Naive thymus-derived CD4-positive, alpha-beta T cell (primary cell): ENCODE measurements at regions of chr12 and their contacts with region 1.

Region 1: GRCh38 chr12:123983822-123984485 is 10.9 kb downstream of the ZNF664 start:
- DNase-seq: peak; percentile 15 to 71 (median 53)
- ATAC-seq: peak; percentile 92
- H3K4me3 ChIP-seq: no peak overlapping the region
- H3K4me3 Mint-ChIP-seq: no peak overlapping the region
- H3K27ac ChIP-seq: no peak overlapping the region
- H3K27ac Mint-ChIP-seq: peak overlapping the region in 1 of 9 donors; percentile 1
- H3K4me1 ChIP-seq: no peaks in the 10 kb centered on the region
- H3K4me1 Mint-ChIP-seq: peaks cover 9 to 33% (median 26%) of the 10 kb centered on the region in 7 donors
- H3K27me3 ChIP-seq: no peaks in the 10 kb centered on the region
- H3K27me3 Mint-ChIP-seq: no peaks in the 10 kb centered on the region

Region 2: GRCh38 chr12:123271001-123271729 is 712.8 kb before region 1 on chr12:
- CTCF ChIA-PET with region 1: no interaction called
- POLR2A ChIA-PET with region 1: no interaction called
- intact Hi-C with region 1: loop called in 1 of 2 experiments (anchors 2 kb)
- DNase-seq: peak; percentile 55 to 84 (median 68)
- ATAC-seq: peak; percentile 88
- H3K4me3 ChIP-seq: no peak overlapping the region
- H3K4me3 Mint-ChIP-seq: peak overlapping the region in 1 of 10 donors; percentile 87
- H3K27ac ChIP-seq: no peak overlapping the region
- H3K27ac Mint-ChIP-seq: no peak overlapping the region
- H3K4me1 ChIP-seq: peaks cover 12 to 18% of the 10 kb centered on the region in 2 donors
- H3K4me1 Mint-ChIP-seq: peaks cover 7 to 30% (median 20%) of the 10 kb centered on the region in 7 donors
- H3K27me3 ChIP-seq: no peaks in the 10 kb centered on the region
- H3K27me3 Mint-ChIP-seq: no peaks in the 10 kb centered on the region

Region 3: DNA sequence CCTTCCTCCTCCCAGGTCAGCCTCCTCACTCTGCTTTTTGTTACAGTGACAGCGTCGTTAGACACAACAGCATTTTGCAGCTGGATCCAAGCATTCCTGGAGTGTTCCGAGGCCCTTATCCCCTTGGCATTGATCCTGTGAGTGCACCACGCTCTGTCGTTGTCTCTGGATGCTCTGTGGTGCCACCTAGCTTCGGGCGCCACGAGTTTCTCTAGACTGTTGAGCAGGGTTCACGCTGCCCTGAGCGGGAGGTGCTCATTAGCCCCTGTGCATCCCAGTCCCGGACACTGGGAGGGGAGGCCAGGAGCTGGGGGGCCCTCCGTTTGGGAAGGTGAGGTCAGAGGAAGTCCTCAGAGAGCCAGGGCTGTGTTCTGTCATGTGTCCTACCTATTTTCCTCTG is 239.1 kb before region 1 on chr12:
- CTCF ChIA-PET with region 1: interaction called, 3 read pairs
- POLR2A ChIA-PET with region 1: no interaction called
- intact Hi-C with region 1: loop called in 1 of 2 experiments (anchors 5 kb)
- DNase-seq: no peak
- ATAC-seq: no peak
- H3K4me3 ChIP-seq: no peak overlapping the region
- H3K4me3 Mint-ChIP-seq: no peak overlapping the region
- H3K27ac ChIP-seq: no peak overlapping the region
- H3K27ac Mint-ChIP-seq: peak overlapping the region in 3 of 9 donors; percentile 17 to 84 (median 49)
- H3K4me1 ChIP-seq: peaks cover 0 to 16% of the 10 kb centered on the region in 2 donors
- H3K4me1 Mint-ChIP-seq: peaks cover 19 to 50% (median 41%) of the 10 kb centered on the region in 7 donors
- H3K27me3 ChIP-seq: no peaks in the 10 kb centered on the region
- H3K27me3 Mint-ChIP-seq: no peaks in the 10 kb centered on the region

Region 4: DNA sequence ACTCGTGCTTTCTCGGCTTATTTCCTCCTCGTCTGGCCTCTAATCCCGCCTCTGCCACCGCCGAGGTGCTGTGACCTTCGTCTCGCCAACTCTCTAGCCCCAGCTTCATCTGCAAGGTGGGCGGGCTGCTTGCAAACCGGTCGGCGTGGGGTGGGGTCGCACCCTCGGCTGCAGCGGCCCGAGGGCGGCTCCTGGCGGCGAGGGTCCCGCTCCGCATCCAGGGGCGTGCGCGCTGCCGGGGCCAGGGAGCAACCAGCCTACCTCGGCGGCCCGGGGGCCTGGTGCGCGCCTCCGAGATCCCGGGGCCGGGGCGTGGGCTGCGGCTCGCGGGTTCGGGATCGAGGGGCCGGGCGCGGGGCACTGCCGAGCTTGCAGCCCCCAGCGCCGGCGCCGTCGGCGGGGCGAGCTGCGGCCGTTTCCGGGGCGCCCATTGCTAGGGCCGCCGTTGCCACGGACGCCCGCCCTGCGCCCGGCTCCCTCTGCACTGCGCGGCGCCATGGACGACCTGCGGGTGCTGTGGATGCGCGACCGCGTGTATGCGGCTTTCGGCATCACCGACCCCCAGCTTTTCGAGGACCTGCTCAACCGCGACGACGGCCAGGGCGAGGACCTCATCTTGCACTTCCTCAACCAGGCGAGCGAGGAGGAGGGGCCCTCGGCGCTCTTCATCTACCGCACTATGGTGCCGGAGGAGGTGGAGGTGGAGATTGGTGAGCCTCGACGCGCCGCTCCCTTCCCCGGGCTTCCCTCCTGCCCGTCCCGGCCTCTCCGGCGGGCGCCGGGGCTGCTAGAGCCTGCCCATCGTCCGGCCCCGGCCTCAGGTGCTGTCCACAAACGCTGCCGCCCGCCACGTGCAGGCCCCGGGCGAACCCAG is 221.9 kb before region 1 on chr12 and contains the start of gene DNAH10:
- CTCF ChIA-PET with region 1: no interaction called
- POLR2A ChIA-PET with region 1: no interaction called
- intact Hi-C with region 1: loop called in 1 of 2 experiments (anchors 5 kb)
- DNase-seq: peak; percentile 15 to 57 (median 37)
- ATAC-seq: peak; percentile 81
- H3K4me3 ChIP-seq: peak within 1 kb of the TSS; percentile 52
- H3K4me3 Mint-ChIP-seq: peak within 1 kb of the TSS; percentile 75 to 94 (median 85)
- H3K27ac ChIP-seq: no peak within 1 kb of the TSS
- H3K27ac Mint-ChIP-seq: peak within 1 kb of the TSS in 2 of 9 donors; percentile 18 to 60
- H3K4me1 ChIP-seq: peaks cover 0 to 4% of the 10 kb centered on the region in 2 donors
- H3K4me1 Mint-ChIP-seq: peaks cover 0 to 12% (median 4%) of the 10 kb centered on the region in 7 donors
- H3K27me3 ChIP-seq: no peaks in the 10 kb centered on the region
- H3K27me3 Mint-ChIP-seq: peaks cover 0 to 6% (median 0%) of the 10 kb centered on the region in 5 donors
- total RNA-seq, gene DNAH10: 0.05 to 0.50 (median 0.11) TPM

Region 5: GRCh38 chr12:123801573-123802178 is 182.3 kb before region 1 on chr12:
- CTCF ChIA-PET with region 1: interaction called, 3 read pairs
- POLR2A ChIA-PET with region 1: no interaction called
- intact Hi-C with region 1: loop called in 1 of 2 experiments (anchors 5 kb)
- DNase-seq: peak in 3 of 9 donors; percentile 1 to 7 (median 2)
- ATAC-seq: no peak
- H3K4me3 ChIP-seq: no peak overlapping the region
- H3K4me3 Mint-ChIP-seq: no peak overlapping the region
- H3K27ac ChIP-seq: no peak overlapping the region
- H3K27ac Mint-ChIP-seq: no peak overlapping the region
- H3K4me1 ChIP-seq: no peaks in the 10 kb centered on the region
- H3K4me1 Mint-ChIP-seq: no peaks in the 10 kb centered on the region
- H3K27me3 ChIP-seq: no peaks in the 10 kb centered on the region
- H3K27me3 Mint-ChIP-seq: peaks cover 0 to 7% (median 0%) of the 10 kb centered on the region in 5 donors

Region 6: GRCh38 chr12:123854918-123855317 is 129.0 kb before region 1 on chr12:
- CTCF ChIA-PET with region 1: no interaction called
- POLR2A ChIA-PET with region 1: no interaction called
- intact Hi-C with region 1: no loop called
- DNase-seq: no peak
- ATAC-seq: no peak
- H3K4me3 ChIP-seq: no peak overlapping the region
- H3K4me3 Mint-ChIP-seq: no peak overlapping the region
- H3K27ac ChIP-seq: no peak overlapping the region
- H3K27ac Mint-ChIP-seq: no peak overlapping the region
- H3K4me1 ChIP-seq: no peaks in the 10 kb centered on the region
- H3K4me1 Mint-ChIP-seq: no peaks in the 10 kb centered on the region
- H3K27me3 ChIP-seq: no peaks in the 10 kb centered on the region
- H3K27me3 Mint-ChIP-seq: peaks cover 0 to 4% (median 0%) of the 10 kb centered on the region in 5 donors

Region 7: GRCh38 chr12:123879691-123880090 is 104.3 kb before region 1 on chr12:
- CTCF ChIA-PET with region 1: no interaction called
- POLR2A ChIA-PET with region 1: no interaction called
- intact Hi-C with region 1: no loop called
- DNase-seq: no peak
- ATAC-seq: no peak
- H3K4me3 ChIP-seq: no peak overlapping the region
- H3K4me3 Mint-ChIP-seq: no peak overlapping the region
- H3K27ac ChIP-seq: no peak overlapping the region
- H3K27ac Mint-ChIP-seq: no peak overlapping the region
- H3K4me1 ChIP-seq: no peaks in the 10 kb centered on the region
- H3K4me1 Mint-ChIP-seq: no peaks in the 10 kb centered on the region
- H3K27me3 ChIP-seq: no peaks in the 10 kb centered on the region
- H3K27me3 Mint-ChIP-seq: peaks cover 0 to 17% (median 0%) of the 10 kb centered on the region in 5 donors

Region 8: GRCh38 chr12:123905319-123905925 is 78.5 kb before region 1 on chr12:
- CTCF ChIA-PET with region 1: interaction called, 76 read pairs
- POLR2A ChIA-PET with region 1: no interaction called
- intact Hi-C with region 1: loop called (anchors 1 kb)
- DNase-seq: peak; percentile 38 to 78 (median 66)
- ATAC-seq: peak; percentile 76
- H3K4me3 ChIP-seq: no peak overlapping the region
- H3K4me3 Mint-ChIP-seq: no peak overlapping the region
- H3K27ac ChIP-seq: no peak overlapping the region
- H3K27ac Mint-ChIP-seq: peak overlapping the region in 1 of 9 donors; percentile 42
- H3K4me1 ChIP-seq: no peaks in the 10 kb centered on the region
- H3K4me1 Mint-ChIP-seq: peaks cover 7 to 17% (median 15%) of the 10 kb centered on the region in 7 donors
- H3K27me3 ChIP-seq: no peaks in the 10 kb centered on the region
- H3K27me3 Mint-ChIP-seq: peaks cover 0 to 17% (median 3%) of the 10 kb centered on the region in 5 donors